Activated CD4-positive, alpha-beta T cell treated with anti-CD3 and anti-CD28 coated beads, Interleukin-2, amount 10 ng/mL, durations not matched to agents 7 days and 5 days (primary cell): ENCODE measurements at regions of chr17 and their contacts with region 1.

Region 1: DNA sequence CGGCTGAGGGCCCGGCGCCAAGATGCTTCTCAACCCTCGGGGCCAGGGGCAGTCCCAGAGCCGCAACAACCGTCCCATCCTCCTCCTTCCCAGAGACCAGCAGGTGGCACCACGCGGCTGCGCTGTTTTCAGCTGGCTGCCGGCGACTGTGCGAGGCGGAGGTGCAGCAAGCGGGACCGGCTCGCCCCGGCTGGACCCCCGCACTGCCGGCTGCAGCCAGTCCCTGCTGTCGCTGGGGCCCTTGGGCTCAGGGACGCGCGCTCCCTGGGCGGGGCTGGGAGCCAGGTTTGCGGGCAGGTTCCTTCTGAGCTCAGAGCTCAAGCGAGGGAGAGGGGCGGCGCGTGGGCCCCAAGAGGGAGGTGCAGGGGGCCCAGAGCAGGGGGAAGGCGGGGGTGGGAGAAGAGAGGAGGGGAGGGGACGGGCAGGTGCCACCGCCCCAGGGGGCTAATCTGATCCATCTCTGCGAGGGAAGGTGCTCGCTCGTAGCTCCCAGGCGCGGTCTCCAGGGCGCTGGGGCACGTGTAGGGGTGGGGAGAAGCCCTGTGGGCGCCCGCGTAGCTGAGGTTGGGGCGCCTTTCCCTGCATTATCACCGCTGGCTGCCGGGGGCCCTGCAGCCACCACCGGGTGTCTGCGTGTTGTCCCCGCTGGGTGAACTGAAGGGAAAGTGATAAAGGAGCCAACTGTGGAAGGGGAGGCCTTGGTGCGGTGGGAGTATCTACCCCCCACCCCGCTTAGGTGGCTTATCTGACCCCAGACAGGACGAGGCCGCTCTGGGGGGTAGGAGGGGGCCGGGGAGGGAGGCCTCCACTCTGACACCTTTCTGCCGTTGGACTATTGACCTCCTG is 24.2 kb downstream of the STAT5A start:
- DNase-seq: peak; percentile 77
- H3K4me3 Mint-ChIP-seq: peak overlapping the region; percentile 56
- H3K27ac Mint-ChIP-seq: peak overlapping the region; percentile 85
- H3K4me1 Mint-ChIP-seq: peaks cover 77% of the 10 kb centered on the region
- H3K27me3 Mint-ChIP-seq: no peaks in the 10 kb centered on the region

Region 2: DNA sequence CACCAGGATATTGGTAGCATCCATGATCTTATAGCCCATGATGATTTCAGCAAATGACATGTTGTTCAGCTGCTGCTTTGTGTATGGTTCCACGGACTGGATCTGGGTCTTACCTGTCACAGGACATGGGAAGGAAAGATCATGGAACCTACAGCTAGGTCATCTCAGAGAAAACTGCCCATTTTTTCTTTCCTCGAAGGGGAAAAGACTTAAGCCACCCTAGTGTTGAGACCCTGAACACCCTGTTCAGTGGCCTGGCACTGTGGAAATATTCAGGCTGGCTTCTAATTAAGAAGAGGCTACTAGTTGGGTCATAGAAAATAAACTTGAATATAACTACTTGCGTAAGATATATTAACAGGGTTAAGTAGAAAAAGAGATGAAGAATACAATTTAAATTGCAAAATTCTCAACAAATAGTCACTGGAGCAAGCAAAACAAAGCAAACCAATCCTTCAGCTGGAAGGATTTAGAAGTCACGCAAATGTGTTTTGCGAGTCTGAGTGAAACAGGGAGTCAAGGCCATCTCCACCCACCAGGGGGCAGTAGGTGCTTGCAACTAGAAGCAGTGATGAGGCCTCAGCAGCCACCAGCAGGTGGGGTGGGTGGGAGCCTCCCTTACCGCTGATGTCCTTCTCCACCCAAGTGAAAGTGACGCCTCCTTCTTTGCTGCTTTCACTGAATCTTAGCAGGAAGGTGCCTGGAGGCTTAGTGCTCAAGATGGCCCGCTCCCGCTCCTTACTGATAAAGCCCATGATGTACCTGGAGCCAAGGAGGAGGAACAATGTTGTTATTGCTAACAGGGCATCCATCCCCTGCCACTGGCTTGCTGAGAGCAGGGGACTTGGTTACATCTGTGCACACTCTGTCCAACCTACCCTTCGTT is 10.1 kb after region 1 on chr17:
- CTCF ChIA-PET with region 1: interaction called, 26 read pairs
- POLR2A ChIA-PET with region 1: no interaction called
- DNase-seq: peak; percentile 98
- H3K4me3 Mint-ChIP-seq: no peak overlapping the region
- H3K27ac Mint-ChIP-seq: peak overlapping the region; percentile 76
- H3K4me1 Mint-ChIP-seq: peaks cover 50% of the 10 kb centered on the region
- H3K27me3 Mint-ChIP-seq: no peaks in the 10 kb centered on the region

Region 3: GRCh38 chr17:42475835-42476234 is 163.3 kb after region 1 on chr17:
- CTCF ChIA-PET with region 1: no interaction called
- POLR2A ChIA-PET with region 1: no interaction called
- DNase-seq: no peak
- H3K4me3 Mint-ChIP-seq: no peak overlapping the region
- H3K27ac Mint-ChIP-seq: no peak overlapping the region
- H3K4me1 Mint-ChIP-seq: peaks cover 15% of the 10 kb centered on the region
- H3K27me3 Mint-ChIP-seq: no peaks in the 10 kb centered on the region